Activated naive CD4-positive, alpha-beta T cell treated with anti-CD3 and anti-CD28 coated beads for 36 hours (primary cell): ENCODE measurements at regions of chr2 and their contacts with region 1.

Region 1: DNA sequence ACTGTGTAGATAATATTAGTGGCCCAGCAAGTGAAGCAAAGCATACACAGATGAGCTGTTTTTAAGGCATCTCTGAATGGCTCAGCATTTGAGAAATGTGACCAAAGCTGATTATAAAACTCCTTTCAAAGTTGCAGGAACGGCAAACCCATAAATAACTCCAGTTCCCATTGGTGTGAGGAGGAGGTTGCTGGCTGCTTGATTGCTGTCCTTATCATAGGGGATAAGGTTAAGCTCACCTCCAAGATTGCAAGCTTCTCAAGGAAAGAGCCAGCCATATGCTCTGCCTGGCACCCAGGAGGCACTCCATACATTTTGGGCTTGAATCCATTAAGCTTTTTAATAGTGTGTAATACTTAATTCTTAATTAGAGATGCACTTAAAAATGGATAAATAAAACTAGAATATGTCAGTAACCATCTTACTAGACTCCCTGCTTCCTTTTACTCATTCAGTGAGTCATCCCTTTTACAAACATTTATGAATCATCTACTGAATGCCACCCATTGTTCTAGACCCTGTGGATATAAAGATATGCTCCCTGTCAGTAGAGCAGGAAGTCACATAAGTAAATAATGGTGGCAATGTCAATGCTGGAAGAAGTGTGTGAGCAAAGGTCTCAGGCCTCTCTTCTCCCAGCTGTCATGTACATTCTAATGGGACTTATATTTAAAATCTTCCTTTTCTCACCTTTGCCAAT is 99.3 kb downstream of the SPATS2L start:
- DNase-seq: no peak
- H3K4me3 Mint-ChIP-seq: no peak overlapping the region
- H3K27ac Mint-ChIP-seq: peak overlapping the region; percentile 59
- H3K4me1 Mint-ChIP-seq: peaks cover 29% of the 10 kb centered on the region
- H3K27me3 Mint-ChIP-seq: no peaks in the 10 kb centered on the region

Region 2: GRCh38 chr2:200226451-200227426 is 179.0 kb before region 1 on chr2:
- CTCF ChIA-PET with region 1: no interaction called
- intact Hi-C with region 1: no loop called
- DNase-seq: no peak
- H3K4me3 Mint-ChIP-seq: no peak overlapping the region
- H3K27ac Mint-ChIP-seq: no peak overlapping the region
- H3K4me1 Mint-ChIP-seq: no peaks in the 10 kb centered on the region
- H3K27me3 Mint-ChIP-seq: peaks cover 8% of the 10 kb centered on the region

Region 3: DNA sequence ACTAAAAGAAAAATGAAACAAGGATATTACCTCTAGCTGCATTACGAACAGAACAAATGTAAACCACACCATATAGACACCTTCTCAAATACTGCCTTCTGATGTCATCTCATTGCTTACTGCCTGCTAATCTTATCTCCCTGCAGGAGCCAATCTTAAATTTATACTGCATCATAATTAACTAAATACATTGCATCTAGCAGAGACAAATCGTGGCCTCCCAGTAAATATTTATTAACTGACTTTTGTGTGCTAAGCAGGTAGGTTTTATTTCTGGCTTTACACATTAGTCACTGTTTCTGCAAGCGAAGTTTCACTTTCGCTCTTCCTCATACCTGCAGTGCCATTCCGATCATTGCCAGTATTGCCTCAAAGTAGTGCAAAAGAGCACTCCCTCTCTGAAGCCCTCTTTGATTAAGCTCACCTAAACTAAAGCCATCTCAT is 31.8 kb before region 1 on chr2:
- CTCF ChIA-PET with region 1: interaction called, 5 read pairs
- intact Hi-C with region 1: loop called (anchors 1 kb)
- DNase-seq: peak; percentile 66
- H3K4me3 Mint-ChIP-seq: peak overlapping the region; percentile 73
- H3K27ac Mint-ChIP-seq: peak overlapping the region; percentile 70
- H3K4me1 Mint-ChIP-seq: peaks cover 40% of the 10 kb centered on the region
- H3K27me3 Mint-ChIP-seq: no peaks in the 10 kb centered on the region

Region 4: GRCh38 chr2:200383383-200384110 is 22.2 kb before region 1 on chr2:
- CTCF ChIA-PET with region 1: no interaction called
- intact Hi-C with region 1: loop called (anchors 1 kb)
- DNase-seq: no peak
- H3K4me3 Mint-ChIP-seq: no peak overlapping the region
- H3K27ac Mint-ChIP-seq: peak overlapping the region; percentile 70
- H3K4me1 Mint-ChIP-seq: peaks cover 20% of the 10 kb centered on the region
- H3K27me3 Mint-ChIP-seq: no peaks in the 10 kb centered on the region

Region 5: GRCh38 chr2:200447139-200447855 is 41.5 kb after region 1 on chr2:
- CTCF ChIA-PET with region 1: no interaction called
- intact Hi-C with region 1: loop called (anchors 1 kb)
- DNase-seq: no peak
- H3K4me3 Mint-ChIP-seq: no peak overlapping the region
- H3K27ac Mint-ChIP-seq: peak overlapping the region; percentile 48
- H3K4me1 Mint-ChIP-seq: peaks cover 26% of the 10 kb centered on the region
- H3K27me3 Mint-ChIP-seq: no peaks in the 10 kb centered on the region

Region 6: GRCh38 chr2:200454927-200455801 is 49.4 kb after region 1 on chr2:
- CTCF ChIA-PET with region 1: interaction called, 5 read pairs
- intact Hi-C with region 1: loop called (anchors 1 kb)
- DNase-seq: no peak
- H3K4me3 Mint-ChIP-seq: no peak overlapping the region
- H3K27ac Mint-ChIP-seq: peak overlapping the region; percentile 73
- H3K4me1 Mint-ChIP-seq: peaks cover 30% of the 10 kb centered on the region
- H3K27me3 Mint-ChIP-seq: no peaks in the 10 kb centered on the region